PC-9 (cell line): ENCODE measurements at regions of chr19 and their contacts with region 1.

Region 1: DNA sequence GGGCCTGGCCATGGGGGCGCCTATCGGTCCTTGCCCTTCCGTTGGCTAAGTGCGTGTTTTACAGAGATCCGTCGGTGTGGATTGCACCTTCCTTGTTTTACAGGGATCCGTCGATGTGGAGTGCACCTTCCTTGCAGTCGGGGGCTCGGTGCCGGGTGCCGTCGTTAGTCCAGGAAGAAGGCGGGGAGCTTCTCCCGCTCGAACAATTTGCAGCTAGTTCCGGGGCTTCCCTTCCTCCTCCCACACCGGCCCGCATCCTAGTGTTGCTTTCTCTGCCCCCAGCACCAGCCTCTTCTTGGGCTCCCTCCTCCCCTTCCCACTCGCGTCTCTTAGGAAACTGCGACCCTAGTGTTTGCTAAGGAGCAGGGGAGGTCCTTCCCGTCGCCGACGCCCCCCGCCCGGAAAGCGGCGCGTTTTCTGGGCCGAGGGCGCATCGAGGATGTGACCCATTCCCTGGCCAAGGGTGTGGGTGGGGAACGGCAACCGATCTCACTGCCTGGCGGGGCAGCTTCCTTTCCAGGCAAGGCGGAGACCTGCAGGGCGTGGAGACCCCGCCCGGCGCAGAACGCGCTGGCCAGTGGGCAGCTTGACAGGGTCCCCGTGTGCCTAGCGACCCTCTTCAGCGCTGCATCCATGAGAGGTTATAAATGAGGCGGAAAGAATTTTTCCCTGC is 75.7 kb upstream of the ZNF91 start:
- DNase-seq: no peak
- H3K4me3 ChIP-seq: no peak overlapping the region
- H3K27ac ChIP-seq: no peak overlapping the region
- H3K4me1 ChIP-seq: no peaks in the 10 kb centered on the region
- H3K27me3 ChIP-seq: peaks cover 34% of the 10 kb centered on the region
- CTCF ChIP-seq: no peak

Region 2: GRCh38 chr19:23321948-23322549 is 149.0 kb before region 1 on chr19:
- CTCF ChIA-PET with region 1: no interaction called
- POLR2A ChIA-PET with region 1: no interaction called
- intact Hi-C with region 1: no loop called
- DNase-seq: no peak
- H3K4me3 ChIP-seq: no peak overlapping the region
- H3K27ac ChIP-seq: no peak overlapping the region
- H3K4me1 ChIP-seq: no peaks in the 10 kb centered on the region
- H3K27me3 ChIP-seq: no peaks in the 10 kb centered on the region
- CTCF ChIP-seq: no peak

Region 3: DNA sequence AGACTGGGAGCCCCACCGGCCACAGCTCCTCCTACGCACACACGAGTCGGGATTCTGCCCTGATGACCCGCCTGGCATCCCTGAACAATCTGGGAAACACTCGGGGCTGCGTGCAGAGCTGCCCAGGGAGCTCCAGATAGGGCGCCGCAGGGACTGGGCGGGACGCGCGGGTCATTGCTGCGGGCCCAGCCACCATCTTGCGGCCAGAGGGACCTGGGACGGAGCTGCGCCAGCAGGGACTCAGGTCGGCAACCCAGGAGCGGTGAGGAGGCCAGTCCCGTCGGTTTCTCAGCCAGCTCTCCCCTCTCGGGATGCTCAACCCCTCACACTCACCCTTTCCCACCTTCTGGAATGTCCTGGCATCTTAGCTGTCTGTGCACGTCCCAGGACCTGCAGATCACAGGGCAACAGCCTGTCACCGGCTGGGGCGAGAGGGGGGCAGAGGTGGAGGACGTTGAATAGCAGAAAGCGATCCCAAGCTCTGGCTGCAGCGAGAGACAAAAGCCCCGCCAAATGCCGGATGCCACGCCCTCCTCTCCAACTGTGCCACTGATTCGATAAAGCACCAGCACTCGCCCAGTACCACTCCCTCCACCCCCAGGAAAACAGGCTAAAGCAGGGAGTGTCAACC is 55.3 kb before region 1 on chr19:
- CTCF ChIA-PET with region 1: no interaction called
- POLR2A ChIA-PET with region 1: no interaction called
- intact Hi-C with region 1: no loop called
- DNase-seq: peak in 1 of 2 experiments; percentile 20
- H3K4me3 ChIP-seq: no peak overlapping the region
- H3K27ac ChIP-seq: no peak overlapping the region
- H3K4me1 ChIP-seq: no peaks in the 10 kb centered on the region
- H3K27me3 ChIP-seq: no peaks in the 10 kb centered on the region
- CTCF ChIP-seq: no peak

Region 4: GRCh38 chr19:23481043-23481442 is 10.0 kb after region 1 on chr19:
- CTCF ChIA-PET with region 1: no interaction called
- POLR2A ChIA-PET with region 1: no interaction called
- intact Hi-C with region 1: no loop called
- DNase-seq: peak; percentile 43 to 92
- H3K4me3 ChIP-seq: no peak overlapping the region
- H3K27ac ChIP-seq: peak overlapping the region; percentile 94
- H3K4me1 ChIP-seq: peaks cover 36% of the 10 kb centered on the region
- H3K27me3 ChIP-seq: no peaks in the 10 kb centered on the region
- CTCF ChIP-seq: no peak

Region 5: DNA sequence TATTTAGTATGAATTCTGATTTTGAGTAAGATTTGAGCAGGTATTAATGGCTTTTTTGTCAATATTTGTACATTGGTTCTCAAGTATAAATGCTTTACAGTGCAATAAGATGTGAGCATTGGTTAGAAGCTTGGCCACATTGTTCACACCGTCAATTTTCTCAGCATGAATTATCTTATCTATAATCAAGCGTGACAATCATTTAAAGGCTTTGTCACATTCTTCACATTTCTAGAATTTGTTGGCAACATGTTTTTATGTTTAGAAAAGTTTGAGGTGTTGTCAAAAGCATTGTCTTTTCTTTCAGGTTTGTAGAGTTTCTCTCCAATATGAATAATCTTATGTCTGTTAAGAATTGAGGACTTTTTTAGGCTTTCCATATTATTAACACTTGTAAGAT is 20.4 kb after region 1 on chr19:
- CTCF ChIA-PET with region 1: no interaction called
- POLR2A ChIA-PET with region 1: interaction called, 16 read pairs
- intact Hi-C with region 1: no loop called
- DNase-seq: no peak
- H3K4me3 ChIP-seq: no peak overlapping the region
- H3K27ac ChIP-seq: no peak overlapping the region
- H3K4me1 ChIP-seq: no peaks in the 10 kb centered on the region
- H3K27me3 ChIP-seq: no peaks in the 10 kb centered on the region
- CTCF ChIP-seq: no peak